Uterus (tissue), 4 donors: ENCODE measurements at regions of chr13 and their contacts with region 1.

Region 1: GRCh38 chr13:48233046-48233907 is at the start of gene ITM2B:
- DNase-seq: peak; percentile 77 to 80
- H3K4me3 ChIP-seq: peak within 1 kb of the TSS; percentile 96 to 98
- H3K27ac ChIP-seq: peak within 1 kb of the TSS; percentile 99 to 100
- H3K4me1 ChIP-seq: peaks cover 0 to 6% of the 10 kb centered on the region in 2 donors
- H3K27me3 ChIP-seq: no peaks in the 10 kb centered on the region
- CTCF ChIP-seq: peak in 2 of 4 experiments; percentile 40 to 48
- POLR2A ChIP-seq: peak; percentile 74 to 90
- total RNA-seq, gene ITM2B: 326 to 725 (median 565) TPM

Region 2: GRCh38 chr13:47764817-47765216 is 468.5 kb before region 1 on chr13:
- intact Hi-C with region 1: no loop called
- DNase-seq: no peak
- H3K4me3 ChIP-seq: no peak overlapping the region
- H3K27ac ChIP-seq: no peak overlapping the region
- H3K4me1 ChIP-seq: no peaks in the 10 kb centered on the region
- H3K27me3 ChIP-seq: no peaks in the 10 kb centered on the region
- CTCF ChIP-seq: no peak
- POLR2A ChIP-seq: no peak

Region 3: GRCh38 chr13:48303359-48304142 is 70.3 kb after region 1 on chr13 and contains the start of gene RB1:
- intact Hi-C with region 1: loop called (anchors 10 kb)
- DNase-seq: peak; percentile 91 to 92
- H3K4me3 ChIP-seq: peak within 1 kb of the TSS; percentile 85 to 94
- H3K27ac ChIP-seq: peak within 1 kb of the TSS; percentile 97 to 99
- H3K4me1 ChIP-seq: peaks cover 0 to 13% of the 10 kb centered on the region in 2 donors
- H3K27me3 ChIP-seq: no peaks in the 10 kb centered on the region
- CTCF ChIP-seq: no peak
- POLR2A ChIP-seq: peak; percentile 94 to 97
- total RNA-seq, gene RB1: 27.4 to 58.1 (median 33.9) TPM

Region 4: GRCh38 chr13:48437371-48437770 is 204.1 kb after region 1 on chr13:
- intact Hi-C with region 1: no loop called
- DNase-seq: peak; percentile 50 to 60
- H3K4me3 ChIP-seq: no peak overlapping the region
- H3K27ac ChIP-seq: peak overlapping the region; percentile 17 to 53
- H3K4me1 ChIP-seq: peaks cover 0 to 5% of the 10 kb centered on the region in 2 donors
- H3K27me3 ChIP-seq: no peaks in the 10 kb centered on the region
- CTCF ChIP-seq: no peak
- POLR2A ChIP-seq: no peak

Region 5: DNA sequence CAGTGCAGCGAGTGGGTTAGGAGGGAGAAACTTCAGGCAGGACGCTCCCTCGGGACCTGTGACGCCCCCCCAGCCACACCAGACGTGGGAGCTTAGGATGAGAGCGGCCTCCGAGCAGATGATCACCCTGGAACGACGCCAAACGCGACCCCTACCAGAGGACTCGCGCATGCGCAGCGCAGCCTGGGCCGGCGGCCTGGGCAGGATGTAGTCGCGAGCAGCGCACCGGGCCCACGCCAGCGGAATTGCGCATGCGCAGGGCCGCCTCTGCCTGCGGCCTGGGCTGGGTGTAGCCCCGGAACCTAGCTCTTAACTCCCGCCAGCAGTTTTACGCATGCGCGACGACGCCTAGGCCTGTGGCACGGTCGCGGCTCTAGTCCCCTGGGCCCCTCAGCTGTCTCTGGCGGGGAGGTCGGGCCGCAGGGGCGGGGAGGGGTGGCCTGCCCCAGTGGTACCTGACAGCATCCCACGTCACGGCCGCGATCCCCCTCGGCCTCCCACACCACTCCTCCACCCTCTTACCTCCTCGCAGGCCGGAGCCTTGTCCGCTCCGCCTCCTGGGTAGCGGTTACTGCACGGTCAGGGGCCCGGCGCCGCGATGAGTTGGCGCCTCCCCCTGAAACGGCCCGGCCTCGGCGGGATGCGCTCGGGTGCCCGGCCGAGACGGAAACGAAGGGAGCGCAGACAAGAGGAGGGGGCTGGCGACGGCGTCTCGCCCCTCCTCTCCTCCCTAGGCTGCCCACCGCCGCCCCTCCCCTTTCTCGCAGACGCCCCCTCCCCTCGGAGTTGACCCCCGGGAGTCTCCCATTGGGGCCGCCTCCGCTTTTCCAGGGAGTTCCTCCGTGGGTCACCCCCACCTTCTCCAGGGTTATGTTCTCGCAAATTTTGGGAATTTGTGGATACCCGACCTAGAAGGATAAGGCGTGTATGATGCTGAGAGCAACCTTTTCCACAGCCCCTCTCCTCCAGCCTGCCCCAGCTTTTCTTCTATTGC is 299.5 kb after region 1 on chr13 and contains the start of gene RCBTB2:
- intact Hi-C with region 1: no loop called
- DNase-seq: peak; percentile 98 to 99
- H3K4me3 ChIP-seq: peak within 1 kb of the TSS; percentile 81 to 92
- H3K27ac ChIP-seq: peak within 1 kb of the TSS; percentile 96 to 99
- H3K4me1 ChIP-seq: peaks cover 0 to 4% of the 10 kb centered on the region in 2 donors
- H3K27me3 ChIP-seq: no peaks in the 10 kb centered on the region
- CTCF ChIP-seq: peak in 1 of 4 experiments; percentile 20
- POLR2A ChIP-seq: peak; percentile 86 to 96
- total RNA-seq, gene RCBTB2: 2.6 to 72.0 (median 9.5) TPM